CD4-positive, alpha-beta memory T cell (primary cell): ENCODE measurements at regions of chr3 and their contacts with region 1.

Region 1: GRCh38 chr3:9362731-9363530 is at the start of gene THUMPD3:
- DNase-seq: peak; percentile 82 to 91 (median 85)
- H3K4me3 ChIP-seq: peak within 1 kb of the TSS; percentile 92 to 96
- H3K4me3 Mint-ChIP-seq: peak within 1 kb of the TSS; percentile 95 to 99 (median 98)
- H3K27ac ChIP-seq: peak within 1 kb of the TSS; percentile 91
- H3K27ac Mint-ChIP-seq: peak within 1 kb of the TSS; percentile 95 to 99 (median 98)
- H3K4me1 ChIP-seq: peaks cover 22% of the 10 kb centered on the region
- H3K4me1 Mint-ChIP-seq: peaks cover 7 to 38% (median 17%) of the 10 kb centered on the region in 4 donors
- H3K27me3 ChIP-seq: no peaks in the 10 kb centered on the region
- H3K27me3 Mint-ChIP-seq: no peaks in the 10 kb centered on the region
- total RNA-seq, gene THUMPD3: 36.9 to 39.2 TPM

Region 2: DNA sequence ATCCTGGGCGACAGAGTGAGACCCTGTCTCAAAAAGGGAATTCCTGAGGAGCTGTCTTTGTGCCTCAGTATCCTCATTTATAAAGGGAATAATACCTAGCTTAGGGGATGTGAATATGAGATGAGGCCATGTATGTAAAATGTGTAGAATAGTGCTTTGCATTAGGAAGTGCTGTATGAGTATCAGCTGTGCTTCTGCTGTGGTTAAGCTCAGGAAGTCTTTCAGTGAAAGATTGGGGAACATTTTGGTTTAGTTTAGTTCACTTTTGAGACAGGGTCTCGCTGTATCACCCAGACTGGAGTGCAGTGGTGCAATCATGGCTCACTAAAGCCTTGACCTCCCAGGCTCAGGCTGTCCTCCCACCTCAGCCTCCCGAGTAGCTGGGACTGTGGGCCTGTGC is 10.5 kb after region 1 on chr3:
- CTCF ChIA-PET with region 1: interaction called, 11 read pairs
- POLR2A ChIA-PET with region 1: interaction called, 18 read pairs
- intact Hi-C with region 1: no loop called
- DNase-seq: no peak
- H3K4me3 ChIP-seq: no peak overlapping the region
- H3K4me3 Mint-ChIP-seq: no peak overlapping the region
- H3K27ac ChIP-seq: no peak overlapping the region
- H3K27ac Mint-ChIP-seq: peak overlapping the region in 4 of 7 donors; percentile 3 to 65 (median 30)
- H3K4me1 ChIP-seq: peaks cover 10% of the 10 kb centered on the region
- H3K4me1 Mint-ChIP-seq: peaks cover 26 to 41% (median 31%) of the 10 kb centered on the region in 4 donors
- H3K27me3 ChIP-seq: no peaks in the 10 kb centered on the region
- H3K27me3 Mint-ChIP-seq: no peaks in the 10 kb centered on the region

Region 3: DNA sequence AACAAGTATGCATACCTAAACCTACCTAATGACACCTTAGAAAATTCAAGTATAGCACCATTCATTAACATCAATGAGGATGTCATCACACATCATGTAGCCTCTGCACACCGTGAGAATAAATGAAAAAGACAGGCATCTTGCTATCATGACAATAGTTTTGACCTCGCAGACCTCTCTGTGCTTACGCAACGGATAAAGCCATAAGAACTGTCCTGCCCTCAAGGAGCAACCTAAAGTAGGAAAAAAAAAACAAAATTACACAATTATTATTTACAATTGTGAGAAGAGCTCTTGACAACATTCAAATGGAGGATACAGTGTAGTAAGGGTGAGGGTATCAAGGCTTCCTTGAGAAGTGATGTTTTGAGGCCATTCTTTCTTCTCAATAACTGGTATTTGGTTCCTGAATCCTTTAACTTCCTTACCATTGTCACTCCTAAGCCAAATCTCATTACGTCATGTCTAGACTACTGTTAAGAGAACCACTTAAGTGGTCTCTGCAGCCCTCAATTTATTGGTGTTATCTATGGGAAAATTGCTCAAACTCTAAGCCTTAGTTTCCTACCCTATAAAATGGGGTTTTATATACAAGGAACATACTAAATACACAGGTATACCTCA is 27.4 kb after region 1 on chr3:
- CTCF ChIA-PET with region 1: interaction called, 9 read pairs
- POLR2A ChIA-PET with region 1: interaction called, 158 read pairs
- intact Hi-C with region 1: no loop called
- DNase-seq: no peak
- H3K4me3 ChIP-seq: no peak overlapping the region
- H3K4me3 Mint-ChIP-seq: no peak overlapping the region
- H3K27ac ChIP-seq: no peak overlapping the region
- H3K27ac Mint-ChIP-seq: peak overlapping the region in 5 of 7 donors; percentile 14 to 97 (median 64)
- H3K4me1 ChIP-seq: peaks cover 56% of the 10 kb centered on the region
- H3K4me1 Mint-ChIP-seq: peaks cover 39 to 73% (median 55%) of the 10 kb centered on the region in 4 donors
- H3K27me3 ChIP-seq: no peaks in the 10 kb centered on the region
- H3K27me3 Mint-ChIP-seq: no peaks in the 10 kb centered on the region